AG04449 (cell line): ENCODE measurements at regions of chr5 and their contacts with region 1.

Region 1: DNA sequence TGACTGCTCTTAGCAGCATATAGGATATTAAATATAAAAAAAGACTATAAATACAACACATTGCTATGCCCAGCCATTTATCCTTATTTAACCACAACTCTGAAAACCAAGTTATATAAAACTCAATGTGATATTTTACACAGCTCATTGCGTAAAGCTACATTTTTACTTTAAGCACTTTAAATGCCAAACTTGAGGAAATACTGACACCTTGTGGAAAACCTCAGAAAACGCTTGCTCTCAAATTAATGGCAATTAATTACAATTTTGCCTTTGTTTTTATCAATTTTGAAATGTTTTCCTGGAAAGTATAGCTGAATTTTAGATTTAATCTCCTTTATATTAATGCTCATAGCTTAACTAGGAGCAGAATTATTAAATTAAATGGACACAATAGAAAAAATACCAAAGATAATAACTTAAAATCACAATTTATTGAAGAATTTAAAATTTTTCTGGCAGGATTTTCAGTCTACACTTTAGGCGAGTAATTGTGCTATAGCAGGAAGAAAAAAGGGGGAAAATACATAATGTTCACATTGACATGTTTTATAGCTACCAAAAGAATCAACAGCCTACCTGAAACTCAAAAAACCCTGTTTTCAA is 25.2 kb upstream of the PLAC8L1 start:
- DNase-seq: peak; percentile 1
- H3K4me3 ChIP-seq: no peak overlapping the region
- CTCF ChIP-seq: peak; percentile 33

Region 2: GRCh38 chr5:145946112-145946861 is 184.3 kb before region 1 on chr5:
- CTCF ChIA-PET with region 1: no interaction called
- POLR2A ChIA-PET with region 1: no interaction called
- DNase-seq: peak; percentile 70
- H3K4me3 ChIP-seq: no peak overlapping the region
- CTCF ChIP-seq: no peak

Region 3: DNA sequence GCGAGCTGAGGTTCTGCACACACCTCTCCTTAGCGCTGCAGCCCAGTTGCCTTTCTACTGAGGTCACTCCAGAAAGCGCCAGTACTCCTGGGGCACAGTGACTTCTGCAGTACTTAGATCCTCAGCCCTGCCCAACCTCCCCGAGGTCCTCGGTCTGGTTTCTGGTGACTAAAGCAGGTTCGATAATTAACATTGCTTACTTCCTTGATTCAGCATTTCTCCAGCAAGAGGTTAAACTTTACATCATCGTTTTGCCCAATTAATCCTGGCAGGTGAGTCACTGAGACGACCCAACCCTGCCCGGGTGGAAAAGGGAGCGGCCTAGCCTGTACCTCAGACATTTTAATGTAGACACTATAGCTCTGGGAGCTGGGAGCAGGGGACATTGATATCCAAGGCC is 102.8 kb before region 1 on chr5:
- CTCF ChIA-PET with region 1: no interaction called
- POLR2A ChIA-PET with region 1: no interaction called
- DNase-seq: no peak
- H3K4me3 ChIP-seq: no peak overlapping the region
- CTCF ChIP-seq: no peak

Region 4: DNA sequence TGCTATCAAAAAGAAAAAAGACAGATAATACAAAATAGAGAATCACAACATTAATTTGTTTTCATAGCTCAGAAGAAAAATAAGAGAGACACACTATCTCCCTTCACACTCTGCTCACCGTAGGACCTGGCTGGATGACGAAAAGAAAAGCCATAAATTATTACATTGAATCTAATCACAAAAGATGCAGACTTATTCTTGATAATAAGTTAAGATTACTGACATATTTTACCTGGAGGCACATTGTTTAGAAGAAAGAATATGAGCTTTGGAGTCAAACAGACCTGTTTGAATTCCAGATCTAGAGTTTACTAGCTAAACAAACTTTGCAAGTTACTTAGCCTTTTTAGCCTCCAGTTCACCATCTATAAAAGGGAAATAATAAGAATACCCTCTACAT is 11.0 kb before region 1 on chr5:
- CTCF ChIA-PET with region 1: interaction called, 33 read pairs
- POLR2A ChIA-PET with region 1: no interaction called
- DNase-seq: no peak
- H3K4me3 ChIP-seq: no peak overlapping the region
- CTCF ChIP-seq: no peak

Region 5: DNA sequence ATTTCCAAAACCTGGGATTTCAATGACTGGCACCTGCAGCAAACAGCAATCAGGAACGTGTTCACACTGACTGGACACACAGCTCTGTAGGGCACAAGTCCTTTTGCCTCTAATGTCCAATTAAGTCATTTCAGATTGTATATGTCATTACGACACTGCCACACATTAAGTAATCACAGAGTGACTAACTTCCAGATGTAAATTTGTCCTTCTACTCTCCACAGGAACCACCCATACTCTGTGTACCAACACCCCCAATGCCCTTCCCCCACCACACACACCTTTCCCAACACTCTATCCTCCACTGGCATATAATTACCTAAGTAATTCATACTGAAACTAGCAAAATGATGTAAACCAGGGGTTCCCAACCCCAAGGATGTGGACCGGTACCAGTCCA is 21.4 kb after region 1 on chr5:
- CTCF ChIA-PET with region 1: interaction called, 11 read pairs
- POLR2A ChIA-PET with region 1: no interaction called
- DNase-seq: no peak
- H3K4me3 ChIP-seq: no peak overlapping the region
- CTCF ChIP-seq: no peak

Region 6: GRCh38 chr5:146249801-146250200 is 119.3 kb after region 1 on chr5:
- CTCF ChIA-PET with region 1: no interaction called
- POLR2A ChIA-PET with region 1: no interaction called
- DNase-seq: no peak
- H3K4me3 ChIP-seq: no peak overlapping the region
- CTCF ChIP-seq: no peak

Region 7: DNA sequence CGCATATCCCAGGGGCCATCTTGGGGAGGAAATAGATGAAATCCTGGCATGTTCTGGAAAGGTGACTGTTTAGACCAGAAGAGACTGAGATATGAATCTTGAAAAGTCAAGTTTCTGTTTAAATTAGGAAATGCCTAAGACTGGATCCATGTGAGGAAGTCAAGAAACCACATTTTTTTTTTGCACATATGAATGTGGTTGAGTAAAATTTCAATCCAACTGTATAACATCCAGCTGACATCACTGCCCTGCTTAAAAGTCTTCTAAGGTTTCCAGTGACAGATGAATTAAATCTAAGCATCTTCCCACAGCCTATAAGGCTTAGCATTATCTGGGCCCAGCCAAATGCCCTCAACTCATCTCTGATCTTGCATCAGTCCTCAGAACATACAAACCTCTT is 268.9 kb after region 1 on chr5:
- CTCF ChIA-PET with region 1: no interaction called
- POLR2A ChIA-PET with region 1: no interaction called
- DNase-seq: no peak
- H3K4me3 ChIP-seq: no peak overlapping the region
- CTCF ChIP-seq: no peak